Activated CD4-positive, alpha-beta memory T cell treated with anti-CD3 and anti-CD28 coated beads for 36 hours (primary cell): ENCODE measurements at regions of chr16 and their contacts with region 1.

Region 1: DNA sequence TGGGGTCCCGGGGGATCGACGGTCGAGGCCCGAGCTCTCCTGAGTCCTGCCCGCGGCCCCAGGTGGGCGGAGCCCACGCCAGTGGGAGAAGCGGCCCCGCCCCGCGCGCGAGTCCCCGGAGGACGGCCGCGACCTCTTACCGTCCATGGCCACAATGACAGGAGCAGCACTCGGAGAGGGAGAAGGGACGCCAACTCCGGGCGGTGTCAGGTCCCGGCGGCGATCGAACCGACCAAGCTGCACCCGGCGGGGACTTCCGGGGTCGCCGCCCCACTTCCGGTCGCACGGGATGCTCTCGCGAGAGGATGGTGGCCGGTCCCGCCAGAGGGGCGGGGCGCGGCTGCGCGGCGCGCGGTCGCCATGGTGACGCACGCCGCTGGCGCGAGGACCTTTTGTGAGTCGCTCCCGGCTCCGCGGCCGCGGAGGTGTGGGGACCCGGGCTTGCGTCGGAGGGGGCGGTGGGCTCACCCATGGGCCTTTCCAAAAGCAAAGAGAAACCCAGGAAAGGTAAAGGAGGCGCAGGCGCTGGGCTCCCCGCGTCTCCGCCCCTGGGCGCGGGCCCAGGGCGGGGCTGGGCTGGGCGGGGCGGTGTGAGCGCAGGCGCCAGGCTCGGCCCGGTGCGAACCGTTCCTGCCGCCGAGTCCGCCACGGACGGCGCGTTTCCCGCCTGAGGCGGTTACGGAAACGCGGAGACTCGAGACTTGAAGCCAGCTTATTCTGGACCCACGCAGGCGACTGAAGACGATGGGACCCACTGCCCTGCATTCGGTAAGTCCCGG is at the starts of genes CHMP1A and SPATA33:
- DNase-seq: peak; percentile 94
- H3K4me3 Mint-ChIP-seq: peak within 1 kb of the TSS; percentile 89
- H3K27ac Mint-ChIP-seq: peak within 1 kb of the TSS; percentile 76
- H3K4me1 Mint-ChIP-seq: peaks cover 35% of the 10 kb centered on the region
- H3K27me3 Mint-ChIP-seq: no peaks in the 10 kb centered on the region
- total RNA-seq, gene CHMP1A: 74.6 to 76.3 TPM
- total RNA-seq, gene SPATA33: 7.1 to 10.1 TPM

Region 2: GRCh38 chr16:89615596-89616090 is 42.0 kb before region 1 on chr16:
- CTCF ChIA-PET with region 1: no interaction called
- POLR2A ChIA-PET with region 1: no interaction called
- intact Hi-C with region 1: no loop called
- DNase-seq: peak; percentile 24
- H3K4me3 Mint-ChIP-seq: no peak overlapping the region
- H3K27ac Mint-ChIP-seq: no peak overlapping the region
- H3K4me1 Mint-ChIP-seq: peaks cover 7% of the 10 kb centered on the region
- H3K27me3 Mint-ChIP-seq: no peaks in the 10 kb centered on the region

Region 3: GRCh38 chr16:89686520-89687091 is 29.0 kb after region 1 on chr16 and contains the start of gene CDK10:
- CTCF ChIA-PET with region 1: interaction called, 3 read pairs
- POLR2A ChIA-PET with region 1: interaction called, 5 read pairs
- intact Hi-C with region 1: loop called (anchors 1 kb)
- DNase-seq: peak; percentile 94
- H3K4me3 Mint-ChIP-seq: peak within 1 kb of the TSS; percentile 92
- H3K27ac Mint-ChIP-seq: peak within 1 kb of the TSS; percentile 90
- H3K4me1 Mint-ChIP-seq: peaks cover 15% of the 10 kb centered on the region
- H3K27me3 Mint-ChIP-seq: no peaks in the 10 kb centered on the region
- total RNA-seq, gene CDK10: 90.0 to 92.4 TPM